A673 (cell line): ENCODE measurements at regions of chr11 and their contacts with region 1.

Region 1: GRCh38 chr11:8033305-8034105 is 46.4 kb downstream of the EIF3F start:
- DNase-seq: peak; percentile 70
- H3K4me3 ChIP-seq: no peak overlapping the region
- H3K27ac ChIP-seq: no peak overlapping the region
- H3K4me1 ChIP-seq: no peaks in the 10 kb centered on the region
- H3K27me3 ChIP-seq: peaks cover 5% of the 10 kb centered on the region
- CTCF ChIP-seq: peak; percentile 80

Region 2: DNA sequence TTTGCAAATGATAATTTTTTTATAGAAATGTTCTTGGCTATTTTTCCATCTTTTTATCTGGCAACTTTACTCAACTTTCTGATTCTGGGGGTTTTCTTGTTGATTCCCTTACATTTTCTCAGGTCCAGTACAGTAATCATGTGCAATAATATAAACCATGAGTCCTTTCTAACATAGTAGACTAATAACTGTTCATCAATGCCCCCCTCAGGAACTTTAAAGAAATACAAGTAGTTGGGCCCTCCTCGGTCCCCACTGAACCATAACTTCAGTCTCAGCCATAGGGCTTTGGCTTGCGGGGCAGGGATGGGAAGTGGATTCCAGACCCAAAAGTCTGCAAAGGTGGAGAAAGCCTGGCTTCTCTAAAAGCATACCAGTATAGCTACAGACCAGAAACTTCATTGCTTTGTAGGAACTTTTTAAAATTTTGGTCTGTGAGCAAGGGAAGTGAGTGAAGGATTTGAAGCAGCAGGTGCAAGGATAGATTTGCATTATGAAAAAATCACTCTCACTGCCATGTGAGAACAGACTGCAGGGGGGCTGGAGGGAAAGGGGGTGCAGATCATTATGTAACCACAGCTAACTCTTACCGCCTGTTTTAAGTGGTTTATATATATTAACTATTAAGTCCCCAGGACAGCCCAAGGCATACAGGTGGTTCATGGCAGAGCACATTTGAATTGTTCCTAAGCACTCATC is 37.1 kb after region 1 on chr11:
- CTCF ChIA-PET with region 1: no interaction called
- POLR2A ChIA-PET with region 1: no interaction called
- intact Hi-C with region 1: loop called (anchors 5 kb)
- DNase-seq: peak; percentile 46
- H3K4me3 ChIP-seq: no peak overlapping the region
- H3K27ac ChIP-seq: no peak overlapping the region
- H3K4me1 ChIP-seq: peaks cover 6% of the 10 kb centered on the region
- H3K27me3 ChIP-seq: peaks cover 3% of the 10 kb centered on the region
- CTCF ChIP-seq: peak; percentile 51

Region 3: DNA sequence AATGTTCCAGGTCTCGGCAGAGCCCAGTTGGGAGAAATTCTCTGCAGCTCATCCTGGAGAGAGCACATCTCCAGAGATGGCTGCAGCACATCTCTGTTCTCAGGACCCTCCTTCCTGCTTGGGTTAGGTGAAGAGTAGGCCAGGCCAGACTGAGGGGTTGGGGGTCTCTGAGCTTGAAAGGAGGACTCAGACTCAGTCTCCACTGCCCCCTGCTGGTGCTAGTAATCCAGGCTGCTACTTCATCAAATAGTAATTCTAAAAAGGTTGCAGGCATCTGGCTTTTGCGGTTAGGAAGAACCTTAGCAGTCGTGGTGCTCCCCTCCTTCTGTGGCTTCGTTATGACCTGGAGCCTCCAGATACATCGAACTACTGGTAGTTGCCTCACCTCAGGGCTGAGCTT is 57.3 kb after region 1 on chr11:
- CTCF ChIA-PET with region 1: interaction called, 19 read pairs
- POLR2A ChIA-PET with region 1: no interaction called
- intact Hi-C with region 1: no loop called
- DNase-seq: peak; percentile 33
- H3K4me3 ChIP-seq: no peak overlapping the region
- H3K27ac ChIP-seq: no peak overlapping the region
- H3K4me1 ChIP-seq: no peaks in the 10 kb centered on the region
- H3K27me3 ChIP-seq: no peaks in the 10 kb centered on the region
- CTCF ChIP-seq: peak; percentile 59